ENCODE measurements at regions of chr1 and their contacts with region 1.

Region 1: GRCh38 chr1:227542143-227543120 is 20.9 kb upstream of the ZNF678 start:
- DNase-seq: peak; percentile 81
- ATAC-seq: peak; percentile 86
- H3K4me3 Mint-ChIP-seq: peak overlapping the region; percentile 52
- H3K27ac Mint-ChIP-seq: no peak overlapping the region
- H3K4me1 Mint-ChIP-seq: no peaks in the 10 kb centered on the region
- H3K27me3 Mint-ChIP-seq: peaks cover 28% of the 10 kb centered on the region
- CTCF ChIP-seq: peak; percentile 89

Region 2: GRCh38 chr1:227563324-227564201 is 21.1 kb after region 1 on chr1 and contains the start of gene ZNF678:
- CTCF ChIA-PET with region 1: interaction called, 13 read pairs
- POLR2A ChIA-PET with region 1: interaction called, 6 read pairs
- DNase-seq: peak; percentile 91
- ATAC-seq: peak; percentile 96
- H3K4me3 Mint-ChIP-seq: peak within 1 kb of the TSS; percentile 90
- H3K27ac Mint-ChIP-seq: peak within 1 kb of the TSS; percentile 99
- H3K4me1 Mint-ChIP-seq: peaks cover 31% of the 10 kb centered on the region
- H3K27me3 Mint-ChIP-seq: no peaks in the 10 kb centered on the region
- CTCF ChIP-seq: no peak
- total RNA-seq, gene ZNF678: 26.4 to 28.9 TPM (median 28.3 TPM) in 3 replicates

Region 3: GRCh38 chr1:227729881-227730627 is 187.6 kb after region 1 on chr1:
- CTCF ChIA-PET with region 1: interaction called, 13 read pairs
- POLR2A ChIA-PET with region 1: no interaction called
- DNase-seq: peak; percentile 74
- ATAC-seq: peak; percentile 27
- H3K4me3 Mint-ChIP-seq: peak overlapping the region; percentile 90
- H3K27ac Mint-ChIP-seq: peak overlapping the region; percentile 83
- H3K4me1 Mint-ChIP-seq: peaks cover 34% of the 10 kb centered on the region
- H3K27me3 Mint-ChIP-seq: peaks cover 13% of the 10 kb centered on the region
- CTCF ChIP-seq: peak; percentile 68

Measured in WTC11 (cell line).